Caco-2 (cell line): ENCODE measurements at regions of chr7 and their contacts with region 1.

Region 1: DNA sequence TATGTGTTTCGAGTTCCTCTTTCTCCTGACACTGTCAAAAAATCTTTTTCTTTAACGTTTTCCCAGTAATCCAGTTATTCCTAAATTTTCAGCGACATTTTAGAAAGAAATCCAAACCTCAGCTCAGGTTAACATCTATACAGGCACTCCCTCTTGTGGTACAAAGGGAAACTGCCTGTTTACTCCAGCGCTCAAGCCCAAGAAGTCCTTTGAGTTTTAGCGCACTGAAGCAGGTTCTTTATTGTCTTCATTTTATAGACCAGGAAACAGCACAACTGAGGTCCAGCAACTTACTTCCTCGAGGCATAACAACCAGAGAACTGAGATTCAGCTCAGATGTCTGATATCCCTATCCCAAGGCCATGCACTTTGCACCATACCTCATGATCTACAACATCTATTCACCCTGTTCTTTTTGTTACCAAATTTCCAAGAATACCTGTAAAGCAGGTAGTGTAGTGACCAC is 287.2 kb upstream of the MKLN1 start:
- DNase-seq: peak; percentile 40 to 65
- H3K4me3 ChIP-seq: no peak overlapping the region
- H3K4me3 Mint-ChIP-seq: no peak overlapping the region
- H3K27ac Mint-ChIP-seq: no peak overlapping the region
- H3K4me1 ChIP-seq: no peaks in the 10 kb centered on the region
- H3K4me1 Mint-ChIP-seq: peaks cover 6% of the 10 kb centered on the region
- H3K27me3 ChIP-seq: no peaks in the 10 kb centered on the region
- H3K27me3 Mint-ChIP-seq: no peaks in the 10 kb centered on the region
- CTCF ChIP-seq: peak; percentile 88 to 93

Region 2: DNA sequence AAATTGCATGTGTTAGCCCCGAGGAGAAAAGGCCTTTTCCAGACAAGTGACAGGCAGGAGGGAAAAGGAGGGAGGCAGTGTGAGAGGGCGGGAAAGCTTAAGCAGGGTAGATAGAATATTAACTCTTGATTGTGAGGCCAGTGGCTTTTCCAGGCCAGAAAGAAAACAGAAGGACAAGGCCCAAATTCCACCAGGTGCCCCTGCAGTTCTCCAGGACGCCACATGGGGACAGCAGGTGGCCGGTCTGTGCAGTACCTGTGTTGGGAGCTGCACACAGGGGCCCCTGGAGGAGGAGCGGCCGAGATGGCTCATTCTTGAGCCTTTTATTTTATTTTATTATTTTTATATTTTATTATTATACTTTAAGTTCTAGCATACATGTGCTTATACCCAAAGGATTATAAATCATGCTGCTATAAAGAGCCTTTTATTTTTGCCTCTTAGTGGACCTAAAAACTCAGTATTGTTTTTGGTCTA is 165.2 kb before region 1 on chr7:
- CTCF ChIA-PET with region 1: interaction called, 7 read pairs
- POLR2A ChIA-PET with region 1: no interaction called
- intact Hi-C with region 1: loop called (anchors 1 kb)
- DNase-seq: peak; percentile 75 to 86
- H3K4me3 ChIP-seq: no peak overlapping the region
- H3K4me3 Mint-ChIP-seq: no peak overlapping the region
- H3K27ac Mint-ChIP-seq: no peak overlapping the region
- H3K4me1 ChIP-seq: no peaks in the 10 kb centered on the region
- H3K4me1 Mint-ChIP-seq: no peaks in the 10 kb centered on the region
- H3K27me3 ChIP-seq: no peaks in the 10 kb centered on the region
- H3K27me3 Mint-ChIP-seq: no peaks in the 10 kb centered on the region
- CTCF ChIP-seq: peak; percentile 90 to 98

Region 3: GRCh38 chr7:130982160-130982638 is 58.3 kb before region 1 on chr7:
- CTCF ChIA-PET with region 1: interaction called, 8 read pairs
- POLR2A ChIA-PET with region 1: no interaction called
- intact Hi-C with region 1: loop called (anchors 1 kb)
- DNase-seq: peak in 1 of 2 experiments; percentile 43
- H3K4me3 ChIP-seq: no peak overlapping the region
- H3K4me3 Mint-ChIP-seq: no peak overlapping the region
- H3K27ac Mint-ChIP-seq: no peak overlapping the region
- H3K4me1 ChIP-seq: peaks cover 23% of the 10 kb centered on the region
- H3K4me1 Mint-ChIP-seq: peaks cover 10% of the 10 kb centered on the region
- H3K27me3 ChIP-seq: no peaks in the 10 kb centered on the region
- H3K27me3 Mint-ChIP-seq: no peaks in the 10 kb centered on the region
- CTCF ChIP-seq: peak; percentile 51 to 79

Region 4: GRCh38 chr7:131007394-131008330 is 32.8 kb before region 1 on chr7:
- CTCF ChIA-PET with region 1: no interaction called
- POLR2A ChIA-PET with region 1: no interaction called
- intact Hi-C with region 1: loop called (anchors 1 kb)
- DNase-seq: peak; percentile 80 to 81
- H3K4me3 ChIP-seq: no peak overlapping the region
- H3K4me3 Mint-ChIP-seq: no peak overlapping the region
- H3K27ac Mint-ChIP-seq: peak overlapping the region; percentile 18
- H3K4me1 ChIP-seq: peaks cover 8% of the 10 kb centered on the region; the same call in 1 of the 2 replicates
- H3K4me1 Mint-ChIP-seq: no peaks in the 10 kb centered on the region
- H3K27me3 ChIP-seq: no peaks in the 10 kb centered on the region
- H3K27me3 Mint-ChIP-seq: no peaks in the 10 kb centered on the region
- CTCF ChIP-seq: peak; percentile 53 to 57